Cardiac septum (tissue), 1 donor: ENCODE measurements at regions of chr7 and their contacts with region 1.

Region 1: GRCh38 chr7:18666107-18666728 is 170.7 kb downstream of the HDAC9 start:
- DNase-seq: peak; percentile 83

Region 2: DNA sequence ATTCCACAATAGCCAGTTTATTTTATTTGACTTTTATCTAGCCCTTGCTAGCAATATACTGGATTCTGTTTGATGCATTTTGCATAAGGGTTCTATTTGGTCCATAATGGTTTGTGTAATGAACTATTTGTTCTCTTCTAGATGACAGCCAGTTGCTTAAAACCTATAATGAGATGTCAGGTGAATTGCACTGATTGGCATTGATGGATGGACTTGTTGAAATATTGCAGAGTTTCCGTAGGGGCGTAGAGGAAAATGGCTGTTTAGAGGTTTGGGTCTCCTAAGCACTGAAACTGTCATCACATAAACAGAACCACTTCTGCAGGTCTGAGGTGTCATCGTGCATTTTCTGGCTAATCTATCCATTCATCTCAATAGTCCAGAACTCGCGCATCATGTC is 295.6 kb before region 1 on chr7:
- intact Hi-C with region 1: loop called (anchors 5 kb)
- DNase-seq: no peak

Region 3: DNA sequence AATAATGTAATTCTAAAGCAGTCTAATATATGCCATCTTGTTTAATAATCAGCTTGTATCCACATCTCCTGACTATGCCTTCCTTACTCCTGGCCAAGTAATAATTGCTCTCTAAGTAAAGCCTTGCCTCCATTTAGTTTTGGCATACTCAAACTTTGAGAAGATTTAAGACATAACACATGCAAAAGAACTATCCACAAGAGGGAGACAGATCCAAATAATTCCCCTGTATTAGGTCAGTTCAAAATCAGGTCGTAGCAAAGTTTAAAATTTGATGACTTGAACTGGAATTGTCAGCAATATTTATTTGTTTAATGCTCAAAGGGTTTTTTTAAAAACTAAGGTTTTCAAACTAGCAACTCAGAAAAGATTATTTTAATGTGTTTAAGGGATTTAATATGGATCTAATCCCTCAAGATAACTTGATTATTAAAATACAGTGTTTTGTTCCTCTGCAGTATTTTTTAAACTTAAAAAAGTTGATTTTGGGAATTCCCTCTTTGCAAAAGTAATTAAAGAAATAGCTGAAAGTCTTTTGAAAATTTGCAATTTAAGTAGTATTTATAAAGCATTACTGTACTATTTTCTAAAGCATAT is 75.4 kb before region 1 on chr7:
- intact Hi-C with region 1: loop called (anchors 5 kb)
- DNase-seq: no peak